ENCODE measurements at regions of chr13 and their contacts with region 1.

Region 1: DNA sequence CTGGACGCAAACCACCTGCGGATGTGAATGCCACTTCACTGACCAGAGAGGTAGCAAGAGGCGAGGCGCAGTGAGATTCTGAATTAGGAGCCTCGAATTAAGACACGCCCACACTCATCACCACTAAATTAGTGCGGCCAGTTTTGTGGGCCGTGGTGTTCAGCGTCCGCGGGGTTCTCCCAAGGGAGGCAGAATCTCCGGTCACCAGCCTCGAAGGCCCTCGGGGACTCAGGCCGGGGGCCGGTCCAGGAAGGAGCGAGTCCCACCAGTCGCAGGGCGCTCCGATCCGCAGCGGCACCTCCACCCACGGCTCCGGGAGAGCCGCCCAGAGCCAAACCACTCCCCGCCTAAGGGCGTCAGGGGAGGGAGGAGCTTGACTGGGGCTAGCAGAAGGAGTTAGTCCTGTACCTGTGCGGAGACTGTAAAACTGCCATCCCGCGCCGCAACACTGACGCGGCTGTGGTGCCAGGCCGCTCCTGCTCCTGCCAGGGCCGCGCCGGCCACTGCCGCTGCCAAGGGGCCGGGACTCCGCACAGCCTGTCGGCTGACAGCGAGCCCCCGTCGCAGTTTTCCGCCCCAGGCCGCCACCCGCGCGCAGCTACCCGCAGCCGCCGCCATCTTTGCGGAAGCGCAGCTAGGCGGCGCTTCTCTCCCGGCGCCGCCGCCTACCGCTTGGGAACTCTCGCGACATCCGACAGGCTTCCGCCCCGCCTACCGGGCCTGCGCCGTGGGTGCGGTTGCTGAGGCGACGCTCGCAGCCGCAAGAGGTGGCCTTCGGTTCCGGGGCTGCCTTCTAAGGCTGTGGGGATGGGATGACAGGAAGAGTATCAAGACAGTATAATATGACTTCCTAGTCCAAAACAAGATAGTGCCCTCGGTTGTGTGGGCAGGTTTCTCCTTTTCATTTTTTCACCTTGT is at the start of gene MICU2:
- DNase-seq: peak; percentile 98
- ATAC-seq: peak; percentile 93
- H3K4me3 ChIP-seq: peak within 1 kb of the TSS; percentile 59 to 92 (median 75)
- H3K4me3 Mint-ChIP-seq: peak within 1 kb of the TSS; percentile 95
- H3K27ac ChIP-seq: peak within 1 kb of the TSS; percentile 80 to 98
- H3K27ac Mint-ChIP-seq: peak within 1 kb of the TSS; percentile 98
- H3K4me1 ChIP-seq: peaks cover 17 to 21% of the 10 kb centered on the region in 2 donors
- H3K4me1 Mint-ChIP-seq: peaks cover 35% of the 10 kb centered on the region
- H3K27me3 ChIP-seq: peaks cover 2 to 12% (median 3%) of the 10 kb centered on the region in 4 experiments
- H3K27me3 Mint-ChIP-seq: peaks cover 29% of the 10 kb centered on the region
- CTCF ChIP-seq: no peak
- total RNA-seq, gene MICU2: 52.2 and 52.5 TPM in 2 replicates

Region 2: DNA sequence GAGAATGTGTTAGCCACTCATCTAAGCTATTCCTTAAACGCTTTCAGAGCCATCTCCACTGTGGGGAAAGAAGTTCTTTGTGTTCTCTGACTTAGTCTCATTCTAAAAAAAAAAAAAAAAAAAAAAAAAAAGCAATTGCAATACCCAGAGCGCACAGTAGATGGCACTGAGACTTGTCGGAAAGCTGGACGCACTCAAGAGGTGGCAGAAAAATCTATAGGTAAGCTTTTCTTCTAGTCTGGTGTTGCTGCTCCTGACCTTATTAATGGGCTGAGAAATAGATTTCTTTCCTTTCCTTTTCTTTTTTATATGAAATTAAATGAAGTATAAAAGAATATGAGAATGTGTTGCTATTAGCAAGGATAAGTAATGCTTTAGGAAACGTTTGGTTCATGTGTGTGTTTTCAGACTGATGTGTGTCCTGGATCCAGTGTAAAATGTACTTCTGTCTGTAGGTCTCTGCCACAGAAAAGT is 1406.4 kb before region 1 on chr13:
- CTCF ChIA-PET with region 1: no interaction called
- POLR2A ChIA-PET with region 1: no interaction called
- intact Hi-C with region 1: loop called (anchors 10 kb)
- DNase-seq: peak; percentile 61
- ATAC-seq: peak; percentile 76
- H3K4me3 ChIP-seq: no peak overlapping the region
- H3K4me3 Mint-ChIP-seq: no peak overlapping the region
- H3K27ac ChIP-seq: no peak overlapping the region
- H3K27ac Mint-ChIP-seq: no peak overlapping the region
- H3K4me1 ChIP-seq: peaks cover 18 to 28% of the 10 kb centered on the region in 2 donors
- H3K4me1 Mint-ChIP-seq: peaks cover 18% of the 10 kb centered on the region
- H3K27me3 ChIP-seq: peaks cover 2 to 44% (median 44%) of the 10 kb centered on the region in 4 experiments
- H3K27me3 Mint-ChIP-seq: peaks cover 60% of the 10 kb centered on the region
- CTCF ChIP-seq: peak; percentile 84

Region 3: GRCh38 chr13:20703780-20704445 is 899.9 kb before region 1 on chr13:
- CTCF ChIA-PET with region 1: no interaction called
- POLR2A ChIA-PET with region 1: no interaction called
- intact Hi-C with region 1: loop called (anchors 10 kb)
- DNase-seq: peak; percentile 88
- ATAC-seq: peak; percentile 88
- H3K4me3 ChIP-seq: peak overlapping the region in 3 of 5 experiments; percentile 15 to 40 (median 29)
- H3K4me3 Mint-ChIP-seq: peak overlapping the region; percentile 52
- H3K27ac ChIP-seq: no peak overlapping the region
- H3K27ac Mint-ChIP-seq: no peak overlapping the region
- H3K4me1 ChIP-seq: peaks cover 11 to 12% of the 10 kb centered on the region in 2 donors
- H3K4me1 Mint-ChIP-seq: peaks cover 12% of the 10 kb centered on the region
- H3K27me3 ChIP-seq: peaks cover 0 to 27% (median 18%) of the 10 kb centered on the region in 4 experiments
- H3K27me3 Mint-ChIP-seq: peaks cover 16% of the 10 kb centered on the region
- CTCF ChIP-seq: peak; percentile 43

Region 4: DNA sequence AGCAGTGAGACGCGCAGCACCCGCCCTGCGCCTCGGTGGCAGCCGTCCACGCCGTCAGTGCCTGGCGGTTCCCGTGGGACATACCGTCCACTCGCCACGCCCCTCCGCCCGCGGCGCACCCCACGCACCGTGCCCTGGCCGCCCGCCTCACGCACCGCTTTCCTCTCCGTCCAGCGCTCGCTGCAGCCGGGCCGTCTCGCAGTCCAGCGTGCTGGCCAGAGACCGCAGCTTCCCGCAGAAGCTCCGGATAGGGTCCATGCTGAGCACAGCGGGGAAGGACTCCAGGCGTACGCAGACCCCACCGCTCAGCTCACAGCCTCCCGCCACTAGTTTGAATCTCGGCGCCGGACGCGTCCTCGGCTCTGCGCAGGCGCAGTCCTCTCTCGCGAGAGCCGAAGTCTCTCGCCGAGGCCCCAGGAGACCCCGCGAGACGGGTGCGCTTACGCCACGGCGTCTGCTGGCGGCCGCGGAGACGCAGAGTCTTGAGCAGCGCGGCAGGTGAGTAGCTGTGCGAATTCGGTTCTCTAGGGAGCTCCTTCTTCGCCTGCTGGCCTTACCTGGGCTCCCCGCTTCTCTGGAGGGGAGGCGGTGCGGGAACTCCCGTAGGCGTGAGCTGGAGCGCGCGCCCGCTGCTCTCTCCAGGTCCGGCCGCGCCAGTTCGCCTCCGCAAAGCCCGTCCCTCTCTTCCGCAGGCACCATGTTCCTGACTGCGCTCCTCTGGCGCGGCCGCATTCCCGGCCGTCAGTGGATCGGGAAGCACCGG is 427.4 kb before region 1 on chr13 and contains the starts of genes MRPL57 and SKA3:
- CTCF ChIA-PET with region 1: no interaction called
- POLR2A ChIA-PET with region 1: interaction called, 6 read pairs
- intact Hi-C with region 1: loop called (anchors 1 kb)
- DNase-seq: peak; percentile 95
- ATAC-seq: peak; percentile 93
- H3K4me3 ChIP-seq: peak within 1 kb of the TSS; percentile 67 to 97 (median 94)
- H3K4me3 Mint-ChIP-seq: peak within 1 kb of the TSS; percentile 98
- H3K27ac ChIP-seq: peak within 1 kb of the TSS; percentile 82 to 85
- H3K27ac Mint-ChIP-seq: peak within 1 kb of the TSS; percentile 97
- H3K4me1 ChIP-seq: peaks cover 11 to 15% of the 10 kb centered on the region in 2 donors
- H3K4me1 Mint-ChIP-seq: peaks cover 15% of the 10 kb centered on the region
- H3K27me3 ChIP-seq: no peaks in the 10 kb centered on the region
- H3K27me3 Mint-ChIP-seq: no peaks in the 10 kb centered on the region
- CTCF ChIP-seq: peak; percentile 22
- total RNA-seq, gene MRPL57: 9.7 and 12.1 TPM in 2 replicates
- total RNA-seq, gene SKA3: 0.20 and 0.53 TPM in 2 replicates

Region 5: GRCh38 chr13:21297914-21298831 is 305.6 kb before region 1 on chr13:
- CTCF ChIA-PET with region 1: interaction called, 7 read pairs
- POLR2A ChIA-PET with region 1: no interaction called
- intact Hi-C with region 1: loop called (anchors 1 kb)
- DNase-seq: peak; percentile 93
- ATAC-seq: peak; percentile 96
- H3K4me3 ChIP-seq: peak overlapping the region; percentile 8 to 88 (median 75)
- H3K4me3 Mint-ChIP-seq: peak overlapping the region; percentile 89
- H3K27ac ChIP-seq: peak overlapping the region; percentile 7 to 77
- H3K27ac Mint-ChIP-seq: peak overlapping the region; percentile 89
- H3K4me1 ChIP-seq: peaks cover 15 to 18% of the 10 kb centered on the region in 2 donors
- H3K4me1 Mint-ChIP-seq: peaks cover 17% of the 10 kb centered on the region
- H3K27me3 ChIP-seq: no peaks in the 10 kb centered on the region
- H3K27me3 Mint-ChIP-seq: no peaks in the 10 kb centered on the region
- CTCF ChIP-seq: peak; percentile 93

Region 6: DNA sequence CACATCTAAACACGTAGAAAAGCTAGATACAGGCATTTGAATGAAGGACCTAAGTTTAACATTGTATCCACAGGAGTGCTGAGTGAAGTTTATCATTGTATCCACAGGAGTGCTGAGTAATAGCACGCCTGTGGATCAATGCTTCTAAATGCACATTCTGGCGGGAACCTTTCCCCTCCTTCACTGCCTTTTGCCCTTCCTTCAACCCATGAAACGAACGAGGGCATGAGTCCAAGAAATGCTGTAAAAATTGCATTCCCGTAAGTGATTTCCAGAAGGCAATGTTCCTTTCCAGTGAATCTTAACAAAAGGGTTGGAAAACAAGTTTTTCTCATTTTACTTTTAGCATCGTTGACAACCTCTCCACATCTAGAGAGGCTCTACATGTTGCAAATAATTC is 232.8 kb before region 1 on chr13:
- CTCF ChIA-PET with region 1: no interaction called
- POLR2A ChIA-PET with region 1: no interaction called
- intact Hi-C with region 1: no loop called
- DNase-seq: no peak
- ATAC-seq: no peak
- H3K4me3 ChIP-seq: no peak overlapping the region
- H3K4me3 Mint-ChIP-seq: no peak overlapping the region
- H3K27ac ChIP-seq: no peak overlapping the region
- H3K27ac Mint-ChIP-seq: no peak overlapping the region
- H3K4me1 ChIP-seq: no peaks in the 10 kb centered on the region
- H3K4me1 Mint-ChIP-seq: peaks cover 1% of the 10 kb centered on the region
- H3K27me3 ChIP-seq: no peaks in the 10 kb centered on the region
- H3K27me3 Mint-ChIP-seq: no peaks in the 10 kb centered on the region
- CTCF ChIP-seq: no peak

Region 7: DNA sequence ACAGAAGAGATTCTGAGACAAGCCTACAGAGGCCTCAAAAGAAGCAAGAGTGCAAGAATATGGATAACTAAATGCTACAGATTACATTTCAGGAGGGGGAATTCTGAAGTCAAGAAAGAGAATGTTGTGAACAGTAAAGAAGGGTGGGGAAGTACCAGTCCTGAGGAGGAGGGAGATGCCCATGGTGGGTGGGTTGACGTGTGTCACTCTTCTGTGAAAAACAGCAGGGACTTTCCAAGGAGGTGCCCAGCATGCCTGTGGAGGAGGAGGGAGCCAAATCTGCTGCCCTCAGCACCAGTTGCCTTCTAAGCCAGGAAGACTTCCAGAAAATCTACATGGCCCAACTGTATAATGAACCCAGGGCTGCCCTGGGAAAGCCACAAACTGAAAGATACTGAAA is 1664.7 kb after region 1 on chr13:
- CTCF ChIA-PET with region 1: no interaction called
- POLR2A ChIA-PET with region 1: no interaction called
- intact Hi-C with region 1: no loop called
- DNase-seq: no peak
- ATAC-seq: no peak
- H3K4me3 ChIP-seq: no peak overlapping the region
- H3K4me3 Mint-ChIP-seq: no peak overlapping the region
- H3K27ac ChIP-seq: no peak overlapping the region
- H3K27ac Mint-ChIP-seq: no peak overlapping the region
- H3K4me1 ChIP-seq: no peaks in the 10 kb centered on the region
- H3K4me1 Mint-ChIP-seq: peaks cover 3% of the 10 kb centered on the region
- H3K27me3 ChIP-seq: no peaks in the 10 kb centered on the region
- H3K27me3 Mint-ChIP-seq: no peaks in the 10 kb centered on the region
- CTCF ChIP-seq: no peak

Measured in B cell (primary cell).